ENCODE measurements at regions of chr12 and their contacts with region 1.

Region 1: GRCh38 chr12:51959211-51959610 is 7.7 kb downstream of the ACVR1B start:
- DNase-seq: no peak
- H3K4me3 ChIP-seq: no peak overlapping the region
- H3K27ac ChIP-seq: peak overlapping the region; percentile 22
- H3K4me1 ChIP-seq: peaks cover 9% of the 10 kb centered on the region
- H3K27me3 ChIP-seq: no peaks in the 10 kb centered on the region
- CTCF ChIP-seq: no peak

Region 2: GRCh38 chr12:51678086-51678724 is 281.0 kb before region 1 on chr12:
- CTCF ChIA-PET with region 1: interaction called, 10 read pairs
- POLR2A ChIA-PET with region 1: no interaction called
- intact Hi-C with region 1: no loop called
- DNase-seq: peak; percentile 76
- H3K4me3 ChIP-seq: no peak overlapping the region
- H3K27ac ChIP-seq: peak overlapping the region; percentile 24
- H3K4me1 ChIP-seq: peaks cover 14% of the 10 kb centered on the region
- H3K27me3 ChIP-seq: no peaks in the 10 kb centered on the region
- CTCF ChIP-seq: peak; percentile 76

Region 3: DNA sequence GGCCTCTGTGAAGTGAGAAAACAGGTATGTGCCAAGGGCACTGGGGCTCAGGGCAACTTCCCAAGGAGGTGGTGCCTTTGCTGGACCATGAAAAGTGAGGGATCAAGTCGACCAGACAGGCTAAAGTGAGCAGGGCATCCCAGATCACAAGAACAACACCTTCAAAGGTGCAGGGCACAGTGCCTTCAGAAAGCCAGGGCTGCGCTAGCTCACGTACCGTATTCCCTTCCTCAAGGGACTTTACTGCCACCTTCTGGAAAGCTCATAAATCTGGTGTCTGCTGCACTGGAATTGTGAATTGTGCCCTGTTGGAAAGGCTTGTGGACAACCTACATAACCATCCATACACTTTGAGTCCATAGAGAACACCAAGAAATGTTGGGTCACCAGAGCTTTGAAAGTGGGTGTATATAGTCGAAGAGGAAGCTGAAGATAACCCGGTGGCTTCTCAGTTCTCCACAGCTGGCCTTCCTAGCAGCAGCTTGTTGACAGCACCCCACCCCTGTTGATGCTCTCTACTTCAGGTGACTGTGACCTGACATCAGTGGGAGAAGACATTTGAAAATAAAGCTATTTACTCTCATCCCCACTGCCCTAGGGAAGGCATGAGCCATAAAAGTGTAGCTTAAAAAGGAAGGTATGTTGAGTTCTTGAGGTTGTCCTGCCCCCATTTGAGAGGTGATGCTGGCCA is 135.2 kb before region 1 on chr12:
- CTCF ChIA-PET with region 1: no interaction called
- POLR2A ChIA-PET with region 1: no interaction called
- intact Hi-C with region 1: no loop called
- DNase-seq: peak; percentile 82
- H3K4me3 ChIP-seq: no peak overlapping the region
- H3K27ac ChIP-seq: no peak overlapping the region
- H3K4me1 ChIP-seq: no peaks in the 10 kb centered on the region
- H3K27me3 ChIP-seq: no peaks in the 10 kb centered on the region
- CTCF ChIP-seq: peak; percentile 70